ENCODE measurements at regions of chr12 and their contacts with region 1.

Region 1: GRCh38 chr12:50055831-50056638 is 1.4 kb upstream of the ASIC1 start:
- DNase-seq: peak; percentile 51 to 60 (median 54)
- H3K4me3 ChIP-seq: peak overlapping the region in 1 of 2 donors; percentile 15
- H3K4me3 Mint-ChIP-seq: peak overlapping the region; percentile 43 to 94 (median 77)
- H3K27ac ChIP-seq: no peak overlapping the region
- H3K27ac Mint-ChIP-seq: no peak overlapping the region
- H3K4me1 ChIP-seq: peaks cover 24% of the 10 kb centered on the region
- H3K4me1 Mint-ChIP-seq: peaks cover 17 to 35% (median 24%) of the 10 kb centered on the region in 4 donors
- H3K27me3 ChIP-seq: peaks cover 22% of the 10 kb centered on the region
- H3K27me3 Mint-ChIP-seq: peaks cover 45 to 61% of the 10 kb centered on the region in 2 donors

Region 2: DNA sequence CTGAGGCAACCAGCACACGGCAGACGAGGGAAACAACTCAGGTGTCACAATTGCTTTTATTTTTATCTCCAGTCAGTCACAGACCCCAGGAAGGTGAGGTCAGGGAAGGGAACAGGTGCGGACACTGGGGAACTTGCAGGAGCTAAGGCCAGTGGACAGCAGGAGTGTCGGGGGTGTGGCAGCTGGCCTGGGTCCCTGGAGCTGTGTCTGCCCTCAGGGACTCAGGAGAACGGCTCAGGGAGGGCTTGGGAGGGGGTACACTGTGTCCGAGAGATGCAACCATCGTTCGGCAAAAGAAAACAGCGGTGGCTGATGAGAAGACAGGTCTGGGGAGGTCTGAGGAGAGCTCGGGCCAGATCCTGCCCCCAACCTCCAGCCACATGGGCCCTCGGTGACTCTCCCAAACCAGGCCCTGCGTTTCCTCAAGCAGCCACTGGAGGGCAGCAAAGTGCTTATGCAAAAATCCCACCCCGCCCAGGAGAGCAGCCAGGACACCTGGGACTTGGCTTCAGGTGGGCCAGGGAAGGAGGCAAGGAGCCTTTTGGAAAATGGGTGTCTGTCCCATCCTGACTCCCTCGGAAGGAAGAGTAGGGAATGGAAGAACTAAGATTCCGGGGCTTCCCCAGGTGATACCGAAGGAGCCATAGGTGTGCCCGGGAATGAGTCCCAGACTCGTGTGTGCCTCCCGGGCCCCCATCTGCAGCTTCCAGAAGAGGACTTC is 189.0 kb before region 1 on chr12:
- CTCF ChIA-PET with region 1: interaction called, 4 read pairs
- POLR2A ChIA-PET with region 1: no interaction called
- intact Hi-C with region 1: loop called (anchors 10 kb)
- DNase-seq: peak; percentile 65 to 73 (median 67)
- H3K4me3 ChIP-seq: no peak overlapping the region
- H3K4me3 Mint-ChIP-seq: no peak overlapping the region
- H3K27ac ChIP-seq: no peak overlapping the region
- H3K27ac Mint-ChIP-seq: no peak overlapping the region
- H3K4me1 ChIP-seq: no peaks in the 10 kb centered on the region
- H3K4me1 Mint-ChIP-seq: no peaks in the 10 kb centered on the region
- H3K27me3 ChIP-seq: no peaks in the 10 kb centered on the region
- H3K27me3 Mint-ChIP-seq: peaks cover 2 to 4% of the 10 kb centered on the region in 2 donors

Region 3: GRCh38 chr12:49975318-49975761 is 80.7 kb before region 1 on chr12:
- CTCF ChIA-PET with region 1: no interaction called
- POLR2A ChIA-PET with region 1: no interaction called
- intact Hi-C with region 1: no loop called
- DNase-seq: no peak
- H3K4me3 ChIP-seq: no peak overlapping the region
- H3K4me3 Mint-ChIP-seq: no peak overlapping the region
- H3K27ac ChIP-seq: no peak overlapping the region
- H3K27ac Mint-ChIP-seq: no peak overlapping the region
- H3K4me1 ChIP-seq: no peaks in the 10 kb centered on the region
- H3K4me1 Mint-ChIP-seq: no peaks in the 10 kb centered on the region
- H3K27me3 ChIP-seq: no peaks in the 10 kb centered on the region
- H3K27me3 Mint-ChIP-seq: peaks cover 0 to 3% of the 10 kb centered on the region in 2 donors

Region 4: GRCh38 chr12:50032639-50033581 is 23.1 kb before region 1 on chr12:
- CTCF ChIA-PET with region 1: interaction called, 10 read pairs
- POLR2A ChIA-PET with region 1: no interaction called
- intact Hi-C with region 1: loop called (anchors 2 kb)
- DNase-seq: no peak
- H3K4me3 ChIP-seq: no peak overlapping the region
- H3K4me3 Mint-ChIP-seq: no peak overlapping the region
- H3K27ac ChIP-seq: no peak overlapping the region
- H3K27ac Mint-ChIP-seq: no peak overlapping the region
- H3K4me1 ChIP-seq: no peaks in the 10 kb centered on the region
- H3K4me1 Mint-ChIP-seq: no peaks in the 10 kb centered on the region
- H3K27me3 ChIP-seq: no peaks in the 10 kb centered on the region
- H3K27me3 Mint-ChIP-seq: peaks cover 9 to 13% of the 10 kb centered on the region in 2 donors

Region 5: GRCh38 chr12:50041062-50041860 is 14.8 kb before region 1 on chr12:
- CTCF ChIA-PET with region 1: interaction called, 20 read pairs
- POLR2A ChIA-PET with region 1: no interaction called
- intact Hi-C with region 1: loop called (anchors 2 kb)
- DNase-seq: no peak
- H3K4me3 ChIP-seq: no peak overlapping the region
- H3K4me3 Mint-ChIP-seq: no peak overlapping the region
- H3K27ac ChIP-seq: no peak overlapping the region
- H3K27ac Mint-ChIP-seq: no peak overlapping the region
- H3K4me1 ChIP-seq: no peaks in the 10 kb centered on the region
- H3K4me1 Mint-ChIP-seq: peaks cover 0 to 1% (median 0%) of the 10 kb centered on the region in 4 donors
- H3K27me3 ChIP-seq: no peaks in the 10 kb centered on the region
- H3K27me3 Mint-ChIP-seq: peaks cover 2 to 4% of the 10 kb centered on the region in 2 donors

Region 6: DNA sequence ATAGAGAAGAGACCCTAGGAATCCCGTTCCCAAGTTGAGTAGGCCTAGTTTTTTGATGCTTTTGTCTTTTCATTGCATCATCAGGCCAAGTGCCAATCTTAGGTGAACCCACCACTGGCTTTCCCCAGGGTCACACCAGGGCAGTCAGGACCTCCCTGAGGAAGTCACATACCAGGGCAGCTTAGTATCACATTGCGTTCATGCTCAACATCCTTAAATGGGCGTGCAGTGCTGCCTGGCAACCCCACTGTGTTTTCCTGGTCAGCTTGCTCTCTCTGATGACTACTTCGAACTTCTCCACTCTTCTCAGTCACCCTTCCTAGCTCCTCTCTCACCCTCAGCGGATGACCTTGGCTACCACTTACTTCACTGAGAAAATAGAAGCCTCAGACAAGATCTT is 10.4 kb after region 1 on chr12:
- CTCF ChIA-PET with region 1: interaction called, 21 read pairs
- POLR2A ChIA-PET with region 1: no interaction called
- intact Hi-C with region 1: no loop called
- DNase-seq: no peak
- H3K4me3 ChIP-seq: no peak overlapping the region
- H3K4me3 Mint-ChIP-seq: no peak overlapping the region
- H3K27ac ChIP-seq: no peak overlapping the region
- H3K27ac Mint-ChIP-seq: no peak overlapping the region
- H3K4me1 ChIP-seq: no peaks in the 10 kb centered on the region
- H3K4me1 Mint-ChIP-seq: peaks cover 4 to 9% (median 6%) of the 10 kb centered on the region in 4 donors
- H3K27me3 ChIP-seq: no peaks in the 10 kb centered on the region
- H3K27me3 Mint-ChIP-seq: peaks cover 9 to 17% of the 10 kb centered on the region in 2 donors

Region 7: DNA sequence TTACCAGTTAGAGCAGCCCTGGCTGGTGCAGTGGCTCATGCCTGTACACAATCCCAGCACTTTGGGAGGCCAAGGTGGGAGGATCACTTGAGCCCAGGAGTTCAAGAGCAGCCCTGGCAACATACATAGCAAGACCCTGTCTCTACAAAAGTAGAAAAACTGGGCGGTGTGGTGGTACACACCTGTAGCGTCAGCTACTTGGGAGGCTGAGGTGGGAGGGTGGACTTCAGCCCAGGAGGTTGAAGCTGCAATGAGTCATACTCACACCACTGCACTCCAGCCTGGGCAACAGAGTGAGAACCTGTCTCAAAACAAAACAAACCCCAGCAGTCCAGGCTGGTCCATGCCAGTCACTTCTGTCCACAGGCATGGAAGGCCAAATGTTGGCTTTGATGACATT is 63.4 kb after region 1 on chr12:
- CTCF ChIA-PET with region 1: no interaction called
- POLR2A ChIA-PET with region 1: no interaction called
- intact Hi-C with region 1: no loop called
- DNase-seq: no peak
- H3K4me3 ChIP-seq: no peak overlapping the region
- H3K4me3 Mint-ChIP-seq: no peak overlapping the region
- H3K27ac ChIP-seq: no peak overlapping the region
- H3K27ac Mint-ChIP-seq: no peak overlapping the region
- H3K4me1 ChIP-seq: peaks cover 33% of the 10 kb centered on the region
- H3K4me1 Mint-ChIP-seq: peaks cover 30 to 60% (median 42%) of the 10 kb centered on the region in 4 donors
- H3K27me3 ChIP-seq: no peaks in the 10 kb centered on the region
- H3K27me3 Mint-ChIP-seq: no peaks in the 10 kb centered on the region

Measured in CD4-positive, alpha-beta memory T cell (primary cell).